Natural killer cell (primary cell): ENCODE measurements at regions of chr3 and their contacts with region 1.

Region 1: GRCh38 chr3:50298836-50299637 is at the starts of genes HYAL3 and NAA80:
- DNase-seq: peak; percentile 99 to 100
- ATAC-seq: peak; percentile 90 to 97 (median 91)
- H3K4me3 ChIP-seq: peak within 1 kb of the TSS; percentile 99
- H3K4me3 Mint-ChIP-seq: peak within 1 kb of the TSS; percentile 97
- H3K27ac ChIP-seq: peak within 1 kb of the TSS; percentile 96
- H3K27ac Mint-ChIP-seq: peak within 1 kb of the TSS; percentile 95 to 97
- H3K4me1 ChIP-seq: peaks cover 27% of the 10 kb centered on the region
- H3K4me1 Mint-ChIP-seq: peaks cover 18 to 33% of the 10 kb centered on the region in 2 donors
- H3K27me3 ChIP-seq: no peaks in the 10 kb centered on the region
- H3K27me3 Mint-ChIP-seq: no peaks in the 10 kb centered on the region
- CTCF ChIP-seq: peak; percentile 45
- total RNA-seq, gene HYAL3: 0.93 to 2.0 (median 1.2) TPM
- total RNA-seq, gene NAA80: 22.2 to 30.3 (median 29.6) TPM

Region 2: DNA sequence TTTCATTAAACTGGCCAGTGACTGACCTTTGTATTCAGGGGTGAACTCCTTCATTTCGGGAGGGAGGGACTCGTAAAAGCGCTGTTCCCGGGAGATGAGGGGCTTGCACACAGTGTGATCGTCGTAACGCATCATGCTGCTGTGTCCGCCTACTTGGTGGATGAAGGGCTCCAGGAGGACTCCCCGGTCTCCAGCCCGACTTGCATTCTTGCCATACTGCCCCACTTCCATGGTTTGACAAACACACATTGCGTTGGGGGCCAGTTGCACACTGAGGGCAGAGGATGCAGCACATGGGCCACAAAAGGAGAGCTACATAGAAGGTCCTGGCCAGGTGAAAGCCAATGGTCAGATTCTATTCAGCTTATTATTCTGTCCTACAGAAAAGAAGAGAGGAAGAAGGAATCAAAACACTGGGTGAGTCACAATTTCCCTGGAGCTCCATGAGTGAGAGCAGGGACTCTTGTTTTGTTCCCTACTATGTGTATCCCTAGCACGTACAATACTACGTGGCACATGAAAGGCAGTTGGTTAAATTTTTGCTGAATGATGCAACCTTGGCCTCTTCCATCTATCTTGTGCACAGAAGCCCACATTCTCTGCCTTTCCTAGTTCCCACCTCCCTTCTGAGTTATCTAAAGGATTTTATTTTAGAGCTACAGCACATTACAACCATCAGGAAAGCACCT is 551.1 kb before region 1 on chr3:
- intact Hi-C with region 1: no loop called
- DNase-seq: no peak
- ATAC-seq: no peak
- H3K4me3 ChIP-seq: no peak overlapping the region
- H3K4me3 Mint-ChIP-seq: no peak overlapping the region
- H3K27ac ChIP-seq: no peak overlapping the region
- H3K27ac Mint-ChIP-seq: peak overlapping the region in 1 of 2 donors; percentile 56
- H3K4me1 ChIP-seq: no peaks in the 10 kb centered on the region
- H3K4me1 Mint-ChIP-seq: peaks cover 10 to 12% of the 10 kb centered on the region in 2 donors
- H3K27me3 ChIP-seq: no peaks in the 10 kb centered on the region
- H3K27me3 Mint-ChIP-seq: no peaks in the 10 kb centered on the region
- CTCF ChIP-seq: no peak

Region 3: GRCh38 chr3:50221411-50222168 is 77.4 kb before region 1 on chr3:
- intact Hi-C with region 1: no loop called
- DNase-seq: no peak
- ATAC-seq: no peak
- H3K4me3 ChIP-seq: no peak overlapping the region
- H3K4me3 Mint-ChIP-seq: no peak overlapping the region
- H3K27ac ChIP-seq: no peak overlapping the region
- H3K27ac Mint-ChIP-seq: no peak overlapping the region
- H3K4me1 ChIP-seq: peaks cover 12% of the 10 kb centered on the region
- H3K4me1 Mint-ChIP-seq: peaks cover under 1 to 5% of the 10 kb centered on the region in 2 donors
- H3K27me3 ChIP-seq: no peaks in the 10 kb centered on the region
- H3K27me3 Mint-ChIP-seq: peaks cover 5 to 9% of the 10 kb centered on the region in 2 donors
- CTCF ChIP-seq: no peak

Region 4: GRCh38 chr3:50235716-50236496 is 63.1 kb before region 1 on chr3 and contains the start of gene GNAI2:
- intact Hi-C with region 1: loop called (anchors 1 kb)
- DNase-seq: peak; percentile 98 to 99
- ATAC-seq: peak; percentile 85 to 97 (median 88)
- H3K4me3 ChIP-seq: peak within 1 kb of the TSS; percentile 96
- H3K4me3 Mint-ChIP-seq: peak within 1 kb of the TSS; percentile 98
- H3K27ac ChIP-seq: peak within 1 kb of the TSS; percentile 87
- H3K27ac Mint-ChIP-seq: peak within 1 kb of the TSS; percentile 95 to 96
- H3K4me1 ChIP-seq: peaks cover 50% of the 10 kb centered on the region
- H3K4me1 Mint-ChIP-seq: peaks cover 32 to 49% of the 10 kb centered on the region in 2 donors
- H3K27me3 ChIP-seq: no peaks in the 10 kb centered on the region
- H3K27me3 Mint-ChIP-seq: no peaks in the 10 kb centered on the region
- CTCF ChIP-seq: no peak
- total RNA-seq, gene GNAI2: 428 to 467 (median 447) TPM

Region 5: GRCh38 chr3:50337191-50337841 is 38.3 kb after region 1 on chr3:
- intact Hi-C with region 1: loop called (anchors 5 kb)
- DNase-seq: peak; percentile 85 to 97
- ATAC-seq: peak; percentile 67 to 80 (median 70)
- H3K4me3 ChIP-seq: peak overlapping the region; percentile 80
- H3K4me3 Mint-ChIP-seq: peak overlapping the region; percentile 98
- H3K27ac ChIP-seq: peak overlapping the region; percentile 93
- H3K27ac Mint-ChIP-seq: peak overlapping the region; percentile 93 to 96
- H3K4me1 ChIP-seq: peaks cover 76% of the 10 kb centered on the region
- H3K4me1 Mint-ChIP-seq: peaks cover 57 to 86% of the 10 kb centered on the region in 2 donors
- H3K27me3 ChIP-seq: no peaks in the 10 kb centered on the region
- H3K27me3 Mint-ChIP-seq: no peaks in the 10 kb centered on the region
- CTCF ChIP-seq: no peak